Lower leg skin (tissue), 4 donors: ENCODE measurements at regions of chrX and their contacts with region 1.

Region 1: GRCh38 chrX:130190801-130191200 is 19.0 kb downstream of the RAB33A start:
- DNase-seq: peak in 1 of 2 donors; percentile 71
- H3K4me3 ChIP-seq: no peak overlapping the region
- CTCF ChIP-seq: no peak
- POLR2A ChIP-seq: no peak

Region 2: GRCh38 chrX:130079824-130080406 is 110.9 kb before region 1 on chrX:
- intact Hi-C with region 1: loop called (anchors 5 kb)
- DNase-seq: peak; percentile 53 to 93
- H3K4me3 ChIP-seq: no peak overlapping the region
- CTCF ChIP-seq: peak in 1 of 3 donors; percentile 60
- POLR2A ChIP-seq: no peak

Region 3: GRCh38 chrX:130139474-130140201 is 51.2 kb before region 1 on chrX:
- intact Hi-C with region 1: no loop called
- DNase-seq: no peak
- H3K4me3 ChIP-seq: no peak overlapping the region
- CTCF ChIP-seq: no peak
- POLR2A ChIP-seq: no peak